ENCODE measurements at regions of chr17 and their contacts with region 1.

Region 1: GRCh38 chr17:14489986-14490385 is 189.1 kb downstream of the HS3ST3B1 start:
- H3K4me3 Mint-ChIP-seq: no peak overlapping the region
- H3K27ac Mint-ChIP-seq: no peak overlapping the region
- H3K4me1 Mint-ChIP-seq: no peaks in the 10 kb centered on the region
- H3K27me3 Mint-ChIP-seq: no peaks in the 10 kb centered on the region

Region 2: GRCh38 chr17:14469971-14470370 is 20.0 kb before region 1 on chr17:
- intact Hi-C with region 1: loop called (anchors 1 kb)
- H3K4me3 Mint-ChIP-seq: no peak overlapping the region
- H3K27ac Mint-ChIP-seq: no peak overlapping the region
- H3K4me1 Mint-ChIP-seq: no peaks in the 10 kb centered on the region
- H3K27me3 Mint-ChIP-seq: no peaks in the 10 kb centered on the region

Region 3: GRCh38 chr17:14630046-14630445 is 140.1 kb after region 1 on chr17:
- intact Hi-C with region 1: no loop called
- H3K4me3 Mint-ChIP-seq: no peak overlapping the region
- H3K27ac Mint-ChIP-seq: no peak overlapping the region
- H3K4me1 Mint-ChIP-seq: peaks cover 8% of the 10 kb centered on the region
- H3K27me3 Mint-ChIP-seq: no peaks in the 10 kb centered on the region

Measured in dendritic cell treated with granulocyte-macrophage colony-stimulating factor and Interleukin-4, amounts not matched to agents 40 ng/mL and 50 ng/mL, for 4 days (primary cell).